ENCODE measurements at regions of chr20 and their contacts with region 1.

Region 1: GRCh38 chr20:4720041-4720976 is 1.4 kb upstream of the PRND start:
- DNase-seq: peak; percentile 68
- H3K4me3 ChIP-seq: no peak overlapping the region
- H3K27ac ChIP-seq: peak overlapping the region; percentile 66
- H3K4me1 ChIP-seq: peaks cover 13% of the 10 kb centered on the region
- H3K27me3 ChIP-seq: no peaks in the 10 kb centered on the region
- CTCF ChIP-seq: peak; percentile 80

Region 2: DNA sequence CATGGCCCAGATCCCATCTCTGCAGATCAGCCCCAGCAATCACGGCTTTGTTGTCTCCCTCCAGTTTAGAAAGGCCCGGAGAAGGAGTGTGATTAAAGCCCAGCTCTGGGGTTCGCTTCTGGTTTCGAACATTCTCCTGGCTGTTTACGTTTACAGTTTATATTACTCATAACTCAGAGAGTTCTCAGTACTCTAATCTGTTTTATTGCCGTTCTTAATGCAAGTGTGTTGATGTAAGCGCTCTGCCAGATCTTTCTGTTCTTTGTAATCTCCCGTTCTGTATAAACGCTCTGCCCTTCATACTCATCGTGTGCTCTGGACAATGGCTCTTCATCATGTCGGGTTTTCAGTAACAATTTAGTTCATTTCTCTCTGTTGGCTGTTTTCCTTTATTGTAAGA is 116.6 kb before region 1 on chr20:
- intact Hi-C with region 1: loop called (anchors 2 kb)
- DNase-seq: no peak
- H3K4me3 ChIP-seq: no peak overlapping the region
- H3K27ac ChIP-seq: peak overlapping the region; percentile 26
- H3K4me1 ChIP-seq: peaks cover 29% of the 10 kb centered on the region
- H3K27me3 ChIP-seq: peaks cover 7% of the 10 kb centered on the region
- CTCF ChIP-seq: no peak

Region 3: DNA sequence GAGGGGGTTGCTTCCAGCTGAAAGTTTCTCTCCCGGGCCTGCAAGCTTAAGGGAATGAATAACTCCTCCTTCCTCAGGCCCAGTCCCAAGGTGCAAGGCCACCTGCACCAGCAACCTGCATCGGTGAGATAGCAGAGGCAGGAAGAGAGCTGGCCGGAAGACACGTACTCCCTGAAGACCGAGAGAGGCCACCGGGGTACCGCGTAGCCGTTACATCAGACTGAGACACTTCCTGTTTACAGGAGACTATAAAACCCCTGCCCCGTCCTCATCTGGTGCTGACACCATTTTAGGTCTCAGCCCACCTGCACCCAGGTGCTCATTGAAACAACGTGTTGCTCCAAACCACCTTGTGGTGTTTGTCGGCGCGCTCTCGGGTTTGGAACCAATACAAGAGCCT is 59.1 kb before region 1 on chr20:
- intact Hi-C with region 1: no loop called
- DNase-seq: no peak
- H3K4me3 ChIP-seq: no peak overlapping the region
- H3K27ac ChIP-seq: no peak overlapping the region
- H3K4me1 ChIP-seq: no peaks in the 10 kb centered on the region
- H3K27me3 ChIP-seq: no peaks in the 10 kb centered on the region
- CTCF ChIP-seq: no peak

Measured in left ventricle myocardium inferior (tissue), 1 donor.